ENCODE measurements at regions of chr3 and their contacts with region 1.

Region 1: GRCh38 chr3:27721717-27722542 is at the start of gene EOMES:
- DNase-seq: peak; percentile 72
- H3K4me3 Mint-ChIP-seq: peak within 1 kb of the TSS; percentile 84
- H3K27ac Mint-ChIP-seq: peak within 1 kb of the TSS; percentile 61
- H3K4me1 Mint-ChIP-seq: peaks cover 42% of the 10 kb centered on the region
- H3K27me3 Mint-ChIP-seq: peaks cover 75% of the 10 kb centered on the region
- total RNA-seq, gene EOMES: 5.2 and 5.6 TPM in 2 replicates

Region 2: GRCh38 chr3:27900316-27900715 is 178.4 kb after region 1 on chr3:
- intact Hi-C with region 1: loop called (anchors 5 kb)
- DNase-seq: no peak
- H3K4me3 Mint-ChIP-seq: no peak overlapping the region
- H3K27ac Mint-ChIP-seq: peak overlapping the region; percentile 68
- H3K4me1 Mint-ChIP-seq: peaks cover 25% of the 10 kb centered on the region
- H3K27me3 Mint-ChIP-seq: no peaks in the 10 kb centered on the region

Region 3: GRCh38 chr3:27960133-27960532 is 238.2 kb after region 1 on chr3:
- intact Hi-C with region 1: loop called (anchors 10 kb)
- DNase-seq: no peak
- H3K4me3 Mint-ChIP-seq: no peak overlapping the region
- H3K27ac Mint-ChIP-seq: no peak overlapping the region
- H3K4me1 Mint-ChIP-seq: peaks cover 41% of the 10 kb centered on the region
- H3K27me3 Mint-ChIP-seq: no peaks in the 10 kb centered on the region

Region 4: DNA sequence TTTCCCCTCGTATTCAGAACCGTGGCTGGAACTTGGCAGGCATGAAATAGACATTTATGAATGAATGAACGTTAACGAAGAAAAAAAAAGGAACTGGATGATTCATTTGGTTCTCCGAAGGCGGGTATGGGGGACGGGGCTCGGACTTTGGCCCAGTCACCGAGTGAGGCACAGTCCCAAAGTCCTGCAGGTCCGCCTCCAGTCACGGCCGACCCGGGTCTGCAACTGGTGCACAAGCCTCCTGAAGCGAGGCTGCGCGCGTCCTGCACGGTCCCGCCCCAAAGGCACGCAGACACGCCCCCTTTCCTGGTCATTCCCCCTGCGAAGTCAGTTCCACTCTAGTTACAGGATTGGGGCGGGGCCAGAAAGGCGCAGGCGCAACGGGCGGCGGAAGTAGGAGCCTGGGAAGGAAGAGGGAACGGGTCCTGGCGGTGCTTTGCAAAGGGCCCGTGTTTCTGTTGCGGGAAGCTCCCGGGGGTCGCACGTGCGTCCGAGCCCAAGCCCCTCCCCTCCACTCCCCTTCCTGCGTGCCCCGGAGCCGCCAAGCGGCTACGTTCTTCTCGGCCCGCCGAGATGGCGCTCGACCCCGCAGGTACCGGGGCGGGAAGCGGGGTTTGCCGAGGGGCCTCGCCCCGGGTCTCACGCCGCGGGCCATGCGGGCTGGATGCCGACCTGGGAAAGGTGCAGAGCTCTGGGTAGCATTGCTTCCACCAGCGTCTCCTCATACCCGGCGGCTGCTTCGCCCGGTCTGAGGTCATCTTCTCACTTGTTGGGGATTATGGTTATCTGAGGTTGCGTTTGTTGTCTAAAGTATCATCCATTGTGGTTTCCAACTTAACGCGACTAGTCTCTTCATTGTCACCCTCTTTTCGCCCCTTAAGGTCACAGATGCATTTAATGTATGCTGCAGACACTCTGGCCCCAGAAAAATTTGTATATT is 519.6 kb after region 1 on chr3 and contains the start of gene CMC1:
- intact Hi-C with region 1: loop called (anchors 5 kb)
- DNase-seq: peak; percentile 86
- H3K4me3 Mint-ChIP-seq: peak within 1 kb of the TSS; percentile 89
- H3K27ac Mint-ChIP-seq: peak within 1 kb of the TSS; percentile 93
- H3K4me1 Mint-ChIP-seq: peaks cover 38% of the 10 kb centered on the region
- H3K27me3 Mint-ChIP-seq: no peaks in the 10 kb centered on the region
- total RNA-seq, gene CMC1: 20.6 and 23.5 TPM in 2 replicates

Measured in activated T-helper 2 cell treated with anti-CD3 and anti-CD28 coated beads, Interferon-gamma antibody, Interleukin-2, Interleukin-4, amounts not matched to agents 10 μg/mL and 5 μg/mL and 100 μg/mL, durations not matched to agents 14 hours and 24 hours and 36 hours (primary cell).